ENCODE measurements at regions of chr3 and their contacts with region 1.

Region 1: GRCh38 chr3:137013955-137014688 is 56.3 kb downstream of the IL20RB start:
- DNase-seq: peak; percentile 88 to 93
- H3K4me3 ChIP-seq: peak overlapping the region in 2 of 3 donors; percentile 0 to 26
- H3K27ac ChIP-seq: peak overlapping the region; percentile 34 to 69 (median 50)
- H3K4me1 ChIP-seq: no peaks in the 10 kb centered on the region
- H3K27me3 ChIP-seq: no peaks in the 10 kb centered on the region
- CTCF ChIP-seq: peak; percentile 52 to 95 (median 86)
- POLR2A ChIP-seq: no peak

Region 2: GRCh38 chr3:136305878-136306277 is 708.2 kb before region 1 on chr3:
- intact Hi-C with region 1: loop called (anchors 10 kb)
- DNase-seq: no peak
- H3K4me3 ChIP-seq: no peak overlapping the region
- H3K27ac ChIP-seq: no peak overlapping the region
- H3K4me1 ChIP-seq: no peaks in the 10 kb centered on the region
- H3K27me3 ChIP-seq: no peaks in the 10 kb centered on the region
- CTCF ChIP-seq: peak in 1 of 6 experiments; percentile 22
- POLR2A ChIP-seq: no peak

Region 3: DNA sequence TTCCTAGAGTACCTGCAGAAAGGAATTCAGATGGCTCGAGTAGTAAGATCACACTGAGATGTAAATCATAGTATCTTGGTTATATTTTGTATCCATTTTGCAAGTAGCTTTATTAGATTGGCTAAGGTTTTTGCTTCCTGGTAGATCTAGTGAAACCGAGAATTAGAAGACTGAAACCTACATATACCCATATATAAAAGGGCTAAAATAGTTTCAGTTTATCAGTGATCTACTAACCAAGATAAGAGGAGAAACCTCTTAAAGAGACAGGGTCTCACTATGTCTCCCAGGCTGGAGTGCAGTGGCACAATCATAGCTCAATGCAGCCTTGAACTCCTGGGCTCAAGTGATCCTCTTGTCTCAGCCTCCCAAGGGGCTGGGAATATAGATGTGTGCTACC is 628.7 kb before region 1 on chr3:
- intact Hi-C with region 1: loop called (anchors 5 kb)
- DNase-seq: no peak
- H3K4me3 ChIP-seq: no peak overlapping the region
- H3K27ac ChIP-seq: no peak overlapping the region
- H3K4me1 ChIP-seq: no peaks in the 10 kb centered on the region
- H3K27me3 ChIP-seq: no peaks in the 10 kb centered on the region
- CTCF ChIP-seq: no peak
- POLR2A ChIP-seq: no peak